Activated CD4-positive, alpha-beta memory T cell treated with anti-CD3 and anti-CD28 coated beads, Interleukin-2, amount 10 ng/mL, durations not matched to agents 7 days and 5 days (primary cell): ENCODE measurements at regions of chr12 and their contacts with region 1.

Region 1: DNA sequence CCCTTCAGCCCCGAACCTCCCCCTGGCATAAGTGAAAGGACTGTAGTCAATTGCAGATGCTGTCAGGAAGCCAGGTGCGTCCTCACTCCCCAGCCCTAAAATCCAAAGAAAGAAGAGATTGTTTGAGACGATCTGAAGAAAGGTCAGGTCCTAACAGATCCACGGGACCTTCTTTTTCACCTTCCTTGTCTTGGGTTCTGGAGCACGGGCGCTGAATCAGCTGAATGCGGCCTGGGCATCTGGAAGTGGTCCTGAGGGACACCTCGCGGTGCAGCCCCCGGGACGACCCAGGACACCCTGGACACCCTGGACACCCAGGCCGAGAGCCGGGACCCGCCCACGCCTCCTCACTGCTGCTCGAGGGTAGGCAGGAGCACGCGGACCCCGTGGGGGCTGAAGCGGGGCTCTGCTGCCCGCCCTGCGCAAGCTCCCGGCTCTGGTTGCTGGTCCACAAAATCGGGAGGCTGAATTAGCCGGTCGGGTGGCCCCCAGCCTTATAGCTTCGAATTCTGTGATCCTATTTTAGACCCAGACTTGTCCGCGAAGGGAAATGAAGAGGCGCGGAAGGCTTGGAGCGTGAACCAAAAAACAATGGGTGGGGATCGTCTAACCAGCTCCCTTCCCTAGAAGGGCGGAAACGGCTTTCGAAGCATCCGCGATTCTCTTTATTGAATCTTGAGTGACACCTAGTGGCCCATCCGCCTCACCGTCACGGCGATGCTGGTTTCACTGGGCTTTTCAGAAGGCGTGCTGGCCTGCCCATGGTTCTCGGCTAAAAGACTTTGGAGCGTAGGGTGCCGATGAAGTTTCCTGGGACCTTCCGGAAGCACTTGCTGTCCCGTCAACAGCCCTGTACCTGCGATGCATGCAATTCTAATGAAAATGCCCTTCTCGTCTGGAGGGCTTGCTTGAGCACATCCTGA is 46.4 kb upstream of the PLXNC1 start:
- DNase-seq: peak; percentile 91
- H3K4me3 Mint-ChIP-seq: peak overlapping the region; percentile 83
- H3K27ac Mint-ChIP-seq: peak overlapping the region; percentile 80
- H3K4me1 Mint-ChIP-seq: peaks cover 43% of the 10 kb centered on the region
- H3K27me3 Mint-ChIP-seq: peaks cover 12% of the 10 kb centered on the region

Region 2: DNA sequence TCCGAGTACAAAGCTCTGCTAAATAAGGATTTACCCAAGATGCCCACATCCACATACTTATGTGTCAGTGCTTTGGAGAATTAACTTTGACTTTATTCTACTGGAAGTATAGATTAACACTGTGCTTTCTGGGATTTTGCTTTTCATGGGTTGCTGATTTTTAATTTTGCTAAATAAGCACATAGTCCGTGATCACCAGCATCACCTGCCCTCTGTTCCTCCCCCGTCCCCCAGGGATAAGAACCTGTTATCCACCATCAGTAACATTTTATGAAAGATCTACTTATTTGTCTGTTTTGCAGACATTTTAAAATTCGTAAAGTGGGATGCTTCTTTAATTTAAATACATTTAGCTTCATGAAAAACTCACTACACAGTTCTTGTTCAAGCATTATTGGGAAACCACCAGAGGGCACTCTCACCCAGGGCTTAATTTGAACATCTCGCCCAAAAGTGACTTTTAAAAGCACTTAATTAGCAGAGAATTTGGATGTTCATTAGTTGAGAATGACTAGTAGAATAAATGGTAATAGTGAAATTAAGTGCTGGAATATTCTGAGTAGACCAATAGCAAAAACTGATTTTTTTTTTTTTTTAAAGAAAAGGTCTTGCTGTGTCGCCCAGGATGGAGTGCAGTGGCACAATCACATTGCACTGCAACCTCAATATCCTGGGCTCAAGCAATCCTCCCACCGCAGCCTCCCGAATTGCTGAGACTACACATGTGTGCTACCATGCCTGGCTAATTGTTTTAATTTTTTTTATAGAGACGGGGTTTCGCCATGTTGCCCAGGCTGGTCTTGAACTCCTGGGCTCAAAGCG is 599.0 kb before region 1 on chr12:
- CTCF ChIA-PET with region 1: interaction called, 271 read pairs
- POLR2A ChIA-PET with region 1: interaction called, 41 read pairs
- DNase-seq: peak; percentile 68
- H3K4me3 Mint-ChIP-seq: no peak overlapping the region
- H3K27ac Mint-ChIP-seq: no peak overlapping the region
- H3K4me1 Mint-ChIP-seq: peaks cover 23% of the 10 kb centered on the region
- H3K27me3 Mint-ChIP-seq: no peaks in the 10 kb centered on the region

Region 3: GRCh38 chr12:93742110-93742934 is 359.7 kb before region 1 on chr12:
- CTCF ChIA-PET with region 1: interaction called, 34 read pairs
- POLR2A ChIA-PET with region 1: interaction called, 13 read pairs
- DNase-seq: peak; percentile 70
- H3K4me3 Mint-ChIP-seq: peak overlapping the region; percentile 86
- H3K27ac Mint-ChIP-seq: peak overlapping the region; percentile 93
- H3K4me1 Mint-ChIP-seq: peaks cover 34% of the 10 kb centered on the region
- H3K27me3 Mint-ChIP-seq: no peaks in the 10 kb centered on the region

Region 4: GRCh38 chr12:93879476-93880421 is 222.2 kb before region 1 on chr12:
- CTCF ChIA-PET with region 1: interaction called, 11 read pairs
- POLR2A ChIA-PET with region 1: no interaction called
- DNase-seq: no peak
- H3K4me3 Mint-ChIP-seq: no peak overlapping the region
- H3K27ac Mint-ChIP-seq: peak overlapping the region; percentile 74
- H3K4me1 Mint-ChIP-seq: peaks cover 24% of the 10 kb centered on the region
- H3K27me3 Mint-ChIP-seq: peaks cover 7% of the 10 kb centered on the region

Region 5: GRCh38 chr12:94074980-94075928 is 26.7 kb before region 1 on chr12:
- CTCF ChIA-PET with region 1: interaction called, 25 read pairs
- POLR2A ChIA-PET with region 1: interaction called, 3 read pairs
- DNase-seq: no peak
- H3K4me3 Mint-ChIP-seq: no peak overlapping the region
- H3K27ac Mint-ChIP-seq: no peak overlapping the region
- H3K4me1 Mint-ChIP-seq: peaks cover 14% of the 10 kb centered on the region
- H3K27me3 Mint-ChIP-seq: peaks cover 18% of the 10 kb centered on the region

Region 6: DNA sequence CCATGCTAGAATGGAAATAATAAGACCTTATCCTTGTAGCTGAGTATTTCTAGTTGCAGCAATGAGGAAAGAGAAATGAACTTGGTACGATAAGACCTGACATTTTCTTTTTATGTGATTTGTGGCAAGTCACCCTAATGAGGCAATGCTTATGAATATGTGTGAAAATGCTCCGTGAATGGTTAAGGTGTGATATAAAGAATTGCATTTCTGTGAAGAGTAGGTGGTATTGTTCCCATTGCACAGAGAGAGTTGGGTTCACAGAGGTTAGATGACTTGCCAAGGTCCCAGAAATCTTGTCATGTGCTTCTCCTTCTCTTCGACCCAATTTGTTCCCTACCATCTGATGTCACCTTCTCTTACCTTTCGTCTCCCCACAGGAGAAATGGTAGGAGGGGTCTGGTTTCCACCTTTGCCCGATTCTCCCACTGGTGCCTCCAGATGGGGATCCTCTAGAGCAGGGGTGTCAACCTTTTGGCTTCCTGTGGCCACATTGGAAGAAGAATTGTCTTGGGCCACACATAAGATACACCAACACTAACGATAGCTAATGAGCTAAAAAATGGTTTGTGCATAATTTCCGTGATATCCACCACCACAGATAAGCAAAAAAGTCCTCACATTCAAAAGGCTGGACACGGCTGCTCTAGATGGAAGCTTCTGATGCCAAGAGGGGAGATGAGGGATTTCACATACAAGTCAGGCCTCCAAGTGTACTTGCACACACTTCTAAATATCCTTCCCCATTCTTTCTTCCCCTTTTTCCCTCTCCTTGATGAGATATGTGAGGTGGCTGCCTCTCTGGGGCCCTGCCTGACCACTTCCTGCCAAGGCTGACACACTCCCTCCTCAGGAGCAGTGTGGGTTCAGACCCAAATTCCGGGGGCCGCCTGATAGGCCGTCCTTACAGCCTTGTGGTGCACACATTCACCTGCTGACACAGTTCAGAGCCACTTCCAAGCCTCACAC is 142.4 kb after region 1 on chr12:
- CTCF ChIA-PET with region 1: no interaction called
- POLR2A ChIA-PET with region 1: no interaction called
- DNase-seq: peak; percentile 68
- H3K4me3 Mint-ChIP-seq: no peak overlapping the region
- H3K27ac Mint-ChIP-seq: peak overlapping the region; percentile 60
- H3K4me1 Mint-ChIP-seq: peaks cover 27% of the 10 kb centered on the region
- H3K27me3 Mint-ChIP-seq: no peaks in the 10 kb centered on the region